ENCODE measurements at regions of chr1 and their contacts with region 1.

Region 1: GRCh38 chr1:203216274-203217138 is 13.0 kb downstream of the CHIT1 start:
- DNase-seq: peak; percentile 71 to 86
- H3K4me3 ChIP-seq: peak overlapping the region in 2 of 4 experiments; percentile 17 to 40; a peak in 3 of 8 replicates
- H3K27ac ChIP-seq: no peak overlapping the region
- H3K4me1 ChIP-seq: peaks cover 0 to 12% (median 11%) of the 10 kb centered on the region in 4 experiments; a peak in 6 of 7 replicates
- H3K27me3 ChIP-seq: no peaks in the 10 kb centered on the region
- CTCF ChIP-seq: peak; percentile 29 to 85 (median 78)
- EP300 ChIP-seq: no peak
- POLR2A ChIP-seq: no peak
- RAD21 ChIP-seq: peak; percentile 87 to 91

Region 2: DNA sequence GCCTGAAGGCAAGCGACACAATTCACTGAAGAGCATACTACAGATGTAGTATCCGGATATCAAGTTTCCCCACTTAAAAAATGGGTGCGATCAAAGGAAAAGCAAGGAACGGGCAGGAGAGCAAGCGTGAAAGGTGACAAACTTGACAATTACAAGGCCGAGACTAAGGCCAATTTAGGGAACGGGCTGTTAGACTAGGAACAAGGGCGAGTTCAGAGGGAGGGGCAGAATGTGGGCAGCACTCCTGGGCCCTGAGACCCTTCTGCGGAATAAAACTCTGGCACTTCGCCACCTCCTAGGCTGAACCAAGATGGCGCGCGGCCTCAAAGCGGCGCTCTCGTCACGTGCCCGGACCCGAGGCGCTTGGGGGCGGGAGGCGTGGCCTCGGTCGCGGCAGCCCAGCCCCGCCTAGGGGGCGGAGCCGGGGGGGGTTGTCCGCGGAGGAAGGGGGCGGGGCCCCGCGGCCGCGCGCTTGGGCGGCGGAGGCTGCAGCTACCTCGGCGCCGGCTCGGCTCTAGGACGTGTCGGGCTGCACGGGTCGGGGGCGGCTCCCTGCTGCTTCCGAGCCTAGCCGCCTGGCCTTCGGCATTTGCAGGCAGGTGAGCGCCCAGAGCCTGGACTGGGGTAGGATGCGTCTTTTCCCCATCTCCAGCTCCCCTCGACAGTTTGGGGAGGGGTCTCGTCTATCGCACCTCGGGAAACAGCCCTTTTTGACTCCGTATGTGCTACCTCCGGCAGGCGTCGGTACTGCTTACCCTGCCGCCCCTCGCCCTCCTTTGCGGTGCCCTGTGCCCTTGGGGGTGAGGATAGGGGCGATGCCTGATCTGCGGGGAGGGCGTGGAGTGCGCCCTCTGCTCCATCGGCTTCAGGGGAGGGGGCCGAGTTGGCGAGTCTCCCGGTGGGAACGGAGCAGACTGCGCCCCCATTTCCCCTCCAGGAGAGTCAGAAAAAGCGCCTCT is 190.2 kb before region 1 on chr1 and contains the start of gene PPFIA4:
- CTCF ChIA-PET with region 1: interaction called, 26 read pairs
- POLR2A ChIA-PET with region 1: no interaction called
- DNase-seq: peak; percentile 73 to 97
- H3K4me3 ChIP-seq: peak within 1 kb of the TSS; percentile 51 to 88 (median 87)
- H3K27ac ChIP-seq: no peak within 1 kb of the TSS
- H3K4me1 ChIP-seq: peaks cover 4 to 13% (median 6%) of the 10 kb centered on the region in 4 experiments
- H3K27me3 ChIP-seq: peaks cover 7 to 26% (median 18%) of the 10 kb centered on the region in 4 experiments
- CTCF ChIP-seq: peak in 1 of 3 experiments; percentile 28; a peak in 1 of 4 replicates
- EP300 ChIP-seq: 0 out of 3 replicates have a peak, but pooled peaks of 1 of the 2 experiments have one; percentile 26
- POLR2A ChIP-seq: peak; percentile 74 to 79
- RAD21 ChIP-seq: peak in 1 of 2 experiments; percentile 11; a peak in 1 of 4 replicates
- total RNA-seq, gene PPFIA4: 7.0 and 9.9 TPM in 2 replicates

Region 3: DNA sequence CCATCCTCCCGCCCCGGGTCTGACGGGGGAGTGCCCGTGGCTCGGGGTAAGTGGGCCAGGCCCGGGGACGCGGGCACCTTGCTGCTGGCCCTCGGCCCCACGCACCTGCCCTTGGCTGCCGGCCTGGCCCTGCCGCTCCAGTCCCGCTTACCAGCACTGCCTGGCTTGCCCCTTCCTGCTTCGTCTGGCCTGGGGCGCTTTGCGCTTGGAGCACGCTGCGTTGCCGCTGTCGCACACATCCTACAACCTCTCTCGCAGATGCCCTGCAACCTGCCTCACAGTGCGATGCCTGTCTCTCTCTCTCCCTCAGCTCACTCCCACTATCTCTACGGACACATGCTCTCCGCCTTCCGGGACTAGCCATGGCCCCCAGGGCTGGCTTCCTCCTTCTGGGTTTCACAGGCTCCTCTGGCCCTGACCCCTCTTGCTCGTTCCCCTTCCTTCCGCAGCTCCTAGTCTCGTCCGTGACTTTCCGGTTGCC is 140.4 kb before region 1 on chr1:
- CTCF ChIA-PET with region 1: interaction called, 24 read pairs
- POLR2A ChIA-PET with region 1: no interaction called
- DNase-seq: peak in 1 of 2 experiments; percentile 72
- H3K4me3 ChIP-seq: peak overlapping the region; percentile 26 to 59 (median 29); a peak in 7 of 8 replicates
- H3K27ac ChIP-seq: no peak overlapping the region
- H3K4me1 ChIP-seq: peaks cover 0 to 10% (median 5%) of the 10 kb centered on the region in 4 experiments; a peak in 5 of 7 replicates
- H3K27me3 ChIP-seq: peaks cover 3 to 32% (median 31%) of the 10 kb centered on the region in 4 experiments
- CTCF ChIP-seq: no peak
- EP300 ChIP-seq: no peak
- POLR2A ChIP-seq: no peak
- RAD21 ChIP-seq: no peak

Region 4: GRCh38 chr1:203133970-203134725 is 82.4 kb before region 1 on chr1:
- CTCF ChIA-PET with region 1: interaction called, 479 read pairs
- POLR2A ChIA-PET with region 1: no interaction called
- DNase-seq: peak in 1 of 2 experiments; percentile 45
- H3K4me3 ChIP-seq: no peak overlapping the region
- H3K27ac ChIP-seq: no peak overlapping the region
- H3K4me1 ChIP-seq: peaks cover 0 to 12% (median 6%) of the 10 kb centered on the region in 4 experiments; a peak in 4 of 7 replicates
- H3K27me3 ChIP-seq: peaks cover 0 to 4% (median 1%) of the 10 kb centered on the region in 4 experiments; a peak in 3 of 7 replicates
- CTCF ChIP-seq: no peak
- EP300 ChIP-seq: no peak
- POLR2A ChIP-seq: no peak
- RAD21 ChIP-seq: no peak

Region 5: DNA sequence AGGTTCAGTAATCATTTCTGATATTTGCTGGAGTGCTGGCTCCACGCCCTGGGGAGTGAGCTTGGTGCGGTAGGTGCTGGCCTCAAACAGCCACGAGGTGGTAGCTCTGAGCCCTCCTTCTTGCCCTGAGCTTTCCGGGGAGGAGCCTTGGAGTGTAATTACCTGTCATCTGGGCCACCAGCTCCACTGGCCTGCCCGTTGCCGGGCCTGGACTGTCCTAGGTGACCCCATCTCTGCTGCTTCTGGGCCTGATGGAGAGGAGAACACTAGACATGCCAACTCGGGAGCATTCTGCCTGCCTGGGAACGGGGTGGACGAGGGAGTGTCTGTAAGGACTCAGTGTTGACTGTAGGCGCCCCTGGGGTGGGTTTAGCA is 50.0 kb before region 1 on chr1:
- CTCF ChIA-PET with region 1: interaction called, 155 read pairs
- POLR2A ChIA-PET with region 1: no interaction called
- DNase-seq: no peak
- H3K4me3 ChIP-seq: no peak overlapping the region
- H3K27ac ChIP-seq: no peak overlapping the region
- H3K4me1 ChIP-seq: no peaks in the 10 kb centered on the region; a peak in 1 of 7 replicates
- H3K27me3 ChIP-seq: no peaks in the 10 kb centered on the region
- CTCF ChIP-seq: peak; percentile 15 to 32 (median 17); a peak in 2 of 4 replicates
- EP300 ChIP-seq: no peak
- POLR2A ChIP-seq: no peak
- RAD21 ChIP-seq: peak; percentile 5 to 23; a peak in 1 of 4 replicates

Region 6: GRCh38 chr1:203197625-203198024 is 18.9 kb before region 1 on chr1:
- CTCF ChIA-PET with region 1: interaction called, 55 read pairs
- POLR2A ChIA-PET with region 1: interaction called, 3 read pairs
- DNase-seq: no peak
- H3K4me3 ChIP-seq: no peak overlapping the region
- H3K27ac ChIP-seq: no peak overlapping the region
- H3K4me1 ChIP-seq: peaks cover 0 to 3% (median 0%) of the 10 kb centered on the region in 4 experiments; a peak in 1 of 7 replicates
- H3K27me3 ChIP-seq: no peaks in the 10 kb centered on the region; a peak in 1 of 7 replicates
- CTCF ChIP-seq: no peak
- EP300 ChIP-seq: no peak
- POLR2A ChIP-seq: no peak
- RAD21 ChIP-seq: no peak

Region 7: DNA sequence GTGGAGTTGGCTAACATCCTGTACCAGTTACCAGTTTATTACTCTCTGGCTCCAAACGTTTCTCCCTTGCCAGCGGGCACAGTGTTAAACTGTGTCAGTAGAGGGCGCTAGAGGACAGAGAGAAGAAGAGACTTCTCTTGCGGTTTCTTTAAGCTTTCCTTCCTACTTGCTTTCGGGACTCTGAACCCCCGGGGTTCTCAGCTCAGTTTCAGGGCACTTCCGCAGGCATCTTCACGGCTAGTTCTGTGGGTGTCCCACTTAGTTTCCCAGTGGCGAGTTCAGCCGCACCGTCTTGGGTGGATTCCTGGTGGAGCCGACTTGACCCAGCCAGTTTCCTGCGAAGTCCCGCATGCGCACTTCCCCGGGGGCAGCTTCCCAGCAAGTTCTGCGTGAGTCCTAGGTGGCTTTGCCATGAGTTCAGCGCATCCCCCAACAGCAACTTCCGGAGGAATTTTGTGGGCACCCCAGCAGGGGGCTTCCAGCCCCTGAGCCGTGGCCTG is 50.9 kb after region 1 on chr1:
- CTCF ChIA-PET with region 1: interaction called, 100 read pairs
- POLR2A ChIA-PET with region 1: no interaction called
- DNase-seq: peak; percentile 50 to 89
- H3K4me3 ChIP-seq: peak overlapping the region; percentile 50 to 70 (median 56)
- H3K27ac ChIP-seq: no peak overlapping the region
- H3K4me1 ChIP-seq: peaks cover 0 to 3% (median 1%) of the 10 kb centered on the region in 4 experiments; a peak in 2 of 7 replicates
- H3K27me3 ChIP-seq: peaks cover 0 to 4% (median 2%) of the 10 kb centered on the region in 4 experiments; a peak in 4 of 7 replicates
- CTCF ChIP-seq: peak; percentile 42 to 90 (median 87)
- EP300 ChIP-seq: no peak
- POLR2A ChIP-seq: no peak
- RAD21 ChIP-seq: peak; percentile 75 to 85

Measured in H1 (cell line).